Dorsolateral prefrontal cortex (tissue), 120 donors: ENCODE measurements at regions of chr5 and their contacts with region 1.

Region 1: GRCh38 chr5:122415030-122415800 is 103.2 kb downstream of the SNCAIP start:
- DNase-seq: peak; percentile 17 to 75 (median 54)
- H3K4me3 ChIP-seq: no peak overlapping the region
- H3K27ac ChIP-seq: no peak overlapping the region
- H3K27me3 ChIP-seq: no peaks in the 10 kb centered on the region
- CTCF ChIP-seq: peak in 55 of 56 donors; percentile 36 to 82 (median 62)

Region 2: GRCh38 chr5:122192497-122193496 is 222.4 kb before region 1 on chr5:
- intact Hi-C with region 1: loop called (anchors 2 to 10 kb)
- DNase-seq: peak in 2 of 10 donors; percentile 15 to 47
- H3K4me3 ChIP-seq: peak overlapping the region in 8 of 59 donors; percentile 3 to 47 (median 32)
- H3K27ac ChIP-seq: no peak overlapping the region
- H3K27me3 ChIP-seq: no peaks in the 10 kb centered on the region
- CTCF ChIP-seq: peak; percentile 58 to 85 (median 71)

Region 3: GRCh38 chr5:122295138-122295537 is 120.1 kb before region 1 on chr5:
- intact Hi-C with region 1: loop called (anchors 5 to 10 kb)
- DNase-seq: no peak
- H3K4me3 ChIP-seq: no peak overlapping the region
- H3K27ac ChIP-seq: no peak overlapping the region
- H3K27me3 ChIP-seq: no peaks in the 10 kb centered on the region
- CTCF ChIP-seq: peak in 46 of 56 donors; percentile 8 to 59 (median 38)

Region 4: GRCh38 chr5:122311961-122312590 is 103.1 kb before region 1 on chr5 and contains the start of gene SNCAIP:
- intact Hi-C with region 1: loop called in 1 of 2 experiments (anchors 5 kb)
- DNase-seq: peak in 9 of 10 donors; percentile 16 to 64 (median 47)
- H3K4me3 ChIP-seq: peak within 1 kb of the TSS; percentile 48 to 84 (median 73)
- H3K27ac ChIP-seq: peak within 1 kb of the TSS in 33 of 59 donors; percentile 12 to 80 (median 57)
- H3K27me3 ChIP-seq: peaks cover 0 to 3% (median 0%) of the 10 kb centered on the region in 45 donors
- CTCF ChIP-seq: no peak
- total RNA-seq, gene SNCAIP: 3.0 to 16.7 (median 7.8) TPM

Region 5: GRCh38 chr5:123438902-123439301 is 1023.7 kb after region 1 on chr5:
- intact Hi-C with region 1: no loop called
- DNase-seq: no peak
- H3K4me3 ChIP-seq: no peak overlapping the region
- H3K27ac ChIP-seq: no peak overlapping the region
- H3K27me3 ChIP-seq: peaks cover 0 to 2% (median 0%) of the 10 kb centered on the region in 45 donors
- CTCF ChIP-seq: no peak